MCF 10A (cell line): ENCODE measurements at regions of chr1 and their contacts with region 1.

Region 1: DNA sequence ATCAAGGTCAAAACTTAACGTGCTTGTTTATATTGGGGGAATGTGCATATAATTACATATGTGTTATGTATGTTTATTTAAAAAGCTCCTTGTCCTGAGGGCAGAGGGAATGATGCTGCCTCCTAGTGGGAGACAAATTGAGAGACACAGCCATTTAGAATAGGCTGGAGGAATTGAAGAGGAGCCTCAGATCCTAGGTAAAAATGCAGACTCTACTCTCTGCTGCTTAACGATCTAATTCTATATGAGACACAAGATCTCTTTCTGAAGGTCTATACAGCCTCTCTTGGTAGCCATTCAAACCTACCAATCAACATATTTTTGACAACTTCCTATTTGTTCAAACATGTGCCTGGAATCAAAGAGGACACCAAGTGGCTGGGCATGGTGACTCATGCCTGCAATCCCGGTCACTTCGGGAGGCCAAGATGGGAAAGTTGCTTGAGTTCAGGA is 136.6 kb upstream of the ZNF648 start:
- DNase-seq: peak; percentile 62
- H3K4me3 Mint-ChIP-seq: peak overlapping the region; percentile 15
- H3K27ac Mint-ChIP-seq: peak overlapping the region; percentile 94
- H3K4me1 Mint-ChIP-seq: peaks cover 56% of the 10 kb centered on the region
- H3K27me3 Mint-ChIP-seq: no peaks in the 10 kb centered on the region
- CTCF ChIP-seq: peak; percentile 20

Region 2: DNA sequence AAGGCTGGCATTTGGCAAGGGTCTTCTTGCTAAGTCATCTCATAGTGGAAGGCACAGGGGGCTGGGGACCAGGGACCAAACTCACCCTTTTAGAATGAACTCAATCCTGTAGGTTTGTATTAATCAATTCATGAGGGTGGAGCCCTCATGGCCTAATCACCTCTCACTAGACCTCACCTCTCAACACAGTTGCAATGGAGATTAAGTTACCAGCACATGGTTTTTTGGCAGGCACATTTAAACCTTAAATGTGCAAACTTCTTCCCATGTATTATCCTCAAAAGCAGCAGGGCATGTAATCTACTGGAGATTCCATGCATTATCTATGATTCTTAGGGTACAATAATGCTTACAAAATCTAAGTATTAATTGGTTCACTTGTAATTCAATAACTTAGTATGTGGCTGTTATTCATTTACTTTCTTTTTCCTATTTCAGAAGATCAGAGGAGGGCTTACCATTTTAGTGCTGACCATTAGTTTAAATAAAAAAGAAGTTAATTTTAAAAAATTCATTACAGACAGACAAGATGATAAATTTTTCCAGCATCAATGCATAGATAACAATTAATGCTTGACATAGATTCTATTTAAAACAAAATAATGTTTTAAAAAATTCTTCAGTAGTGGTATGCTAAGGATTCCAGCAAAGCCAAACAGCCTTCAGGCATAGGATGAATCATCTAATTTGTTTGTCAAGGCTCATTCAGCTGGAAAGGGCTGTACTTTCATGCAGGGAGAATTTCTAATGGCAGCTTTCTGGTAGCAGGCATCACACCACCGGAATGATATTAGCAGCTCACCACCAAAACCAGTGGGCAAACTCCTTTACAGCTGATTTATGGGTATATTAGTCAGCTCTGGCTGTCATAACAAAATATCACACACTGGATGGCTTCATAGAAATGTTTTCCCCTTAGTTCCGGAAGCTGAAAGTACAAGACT is 12.0 kb before region 1 on chr1:
- CTCF ChIA-PET with region 1: interaction called, 16 read pairs
- POLR2A ChIA-PET with region 1: interaction called, 131 read pairs
- intact Hi-C with region 1: no loop called
- DNase-seq: peak; percentile 91
- H3K4me3 Mint-ChIP-seq: peak overlapping the region; percentile 10
- H3K27ac Mint-ChIP-seq: peak overlapping the region; percentile 81
- H3K4me1 Mint-ChIP-seq: peaks cover 58% of the 10 kb centered on the region
- H3K27me3 Mint-ChIP-seq: no peaks in the 10 kb centered on the region
- CTCF ChIP-seq: no peak

Region 3: GRCh38 chr1:182215764-182216163 is 17.7 kb after region 1 on chr1:
- CTCF ChIA-PET with region 1: interaction called, 8 read pairs
- POLR2A ChIA-PET with region 1: interaction called, 16 read pairs
- intact Hi-C with region 1: no loop called
- DNase-seq: peak; percentile 28
- H3K4me3 Mint-ChIP-seq: no peak overlapping the region
- H3K27ac Mint-ChIP-seq: peak overlapping the region; percentile 7
- H3K4me1 Mint-ChIP-seq: peaks cover 32% of the 10 kb centered on the region
- H3K27me3 Mint-ChIP-seq: no peaks in the 10 kb centered on the region
- CTCF ChIP-seq: no peak

Region 4: DNA sequence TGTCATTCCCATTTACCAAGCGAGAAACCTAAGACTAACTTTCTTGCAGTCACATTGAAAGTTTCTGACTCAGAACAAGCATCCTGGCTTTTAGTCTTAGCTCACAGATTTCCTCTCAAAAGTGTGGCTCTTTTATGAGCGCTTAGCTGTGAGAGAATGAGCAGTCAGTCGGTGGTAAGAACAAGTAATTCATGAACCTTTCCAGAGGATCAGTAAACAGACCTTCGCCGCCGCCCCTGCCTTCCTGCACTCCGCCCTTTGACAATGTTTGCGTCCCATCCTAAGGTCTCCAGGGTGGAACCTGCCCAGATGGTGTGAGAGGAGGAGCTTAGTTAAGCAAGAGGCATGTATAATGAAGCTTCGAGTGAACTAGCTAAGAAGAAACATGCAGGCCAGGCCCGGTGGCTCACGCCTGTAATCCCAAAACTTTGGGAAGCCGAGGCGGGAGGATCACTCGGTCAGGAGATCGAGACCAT is 51.2 kb after region 1 on chr1:
- CTCF ChIA-PET with region 1: interaction called, 5 read pairs
- POLR2A ChIA-PET with region 1: interaction called, 11 read pairs
- intact Hi-C with region 1: no loop called
- DNase-seq: no peak
- H3K4me3 Mint-ChIP-seq: no peak overlapping the region
- H3K27ac Mint-ChIP-seq: no peak overlapping the region
- H3K4me1 Mint-ChIP-seq: peaks cover 5% of the 10 kb centered on the region
- H3K27me3 Mint-ChIP-seq: no peaks in the 10 kb centered on the region
- CTCF ChIP-seq: no peak

Region 5: GRCh38 chr1:182374101-182374834 is 176.2 kb after region 1 on chr1:
- CTCF ChIA-PET with region 1: no interaction called
- POLR2A ChIA-PET with region 1: interaction called, 71 read pairs
- intact Hi-C with region 1: no loop called
- DNase-seq: no peak
- H3K4me3 Mint-ChIP-seq: no peak overlapping the region
- H3K27ac Mint-ChIP-seq: no peak overlapping the region
- H3K4me1 Mint-ChIP-seq: peaks cover 7% of the 10 kb centered on the region
- H3K27me3 Mint-ChIP-seq: no peaks in the 10 kb centered on the region
- CTCF ChIP-seq: no peak

Region 6: DNA sequence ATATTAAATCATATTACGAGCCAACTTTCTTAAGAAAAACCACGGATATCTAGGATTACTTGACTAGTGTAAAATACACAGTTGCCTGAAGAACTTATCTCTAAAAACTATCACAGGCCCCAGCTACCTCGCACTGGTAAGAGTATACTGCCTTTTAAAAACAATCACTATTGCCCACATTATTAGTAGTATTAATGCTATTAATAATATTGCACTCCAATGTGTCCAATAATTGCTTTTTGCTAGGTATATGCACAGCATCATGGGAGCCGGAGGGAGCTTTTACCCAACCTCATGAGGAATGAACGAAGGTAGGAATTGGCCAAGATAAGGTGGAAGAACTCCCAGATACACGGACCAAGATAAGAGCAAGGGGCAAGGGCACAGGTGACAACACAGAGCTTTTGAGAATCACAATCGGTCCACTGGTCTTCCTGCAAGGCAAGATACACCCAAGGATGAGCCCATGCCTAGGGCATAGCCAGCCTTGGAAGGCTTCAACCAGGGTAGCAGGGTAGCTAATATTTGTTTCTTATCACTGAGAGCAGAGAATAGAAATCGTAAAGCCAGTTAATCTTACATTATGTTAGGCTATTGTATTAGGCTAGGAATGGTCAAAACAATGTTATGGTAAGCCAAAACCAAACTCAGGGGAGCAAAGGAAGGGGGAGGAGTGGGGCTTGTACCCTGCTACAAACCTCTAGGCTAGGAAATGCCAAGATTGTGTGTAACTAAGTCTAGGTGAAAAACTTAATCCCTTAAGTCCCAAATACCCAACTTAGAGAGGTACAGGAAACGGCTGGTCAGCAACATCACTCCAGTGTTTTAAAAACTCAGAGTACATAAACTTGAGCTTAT is 184.1 kb after region 1 on chr1:
- CTCF ChIA-PET with region 1: interaction called, 7 read pairs
- POLR2A ChIA-PET with region 1: interaction called, 71 read pairs
- intact Hi-C with region 1: no loop called
- DNase-seq: no peak
- H3K4me3 Mint-ChIP-seq: no peak overlapping the region
- H3K27ac Mint-ChIP-seq: peak overlapping the region; percentile 78
- H3K4me1 Mint-ChIP-seq: peaks cover 39% of the 10 kb centered on the region
- H3K27me3 Mint-ChIP-seq: no peaks in the 10 kb centered on the region
- CTCF ChIP-seq: no peak

Region 7: GRCh38 chr1:182391362-182392044 is 193.4 kb after region 1 on chr1 and contains the start of gene GLUL:
- CTCF ChIA-PET with region 1: interaction called, 10 read pairs
- POLR2A ChIA-PET with region 1: interaction called, 21 read pairs
- intact Hi-C with region 1: loop called (anchors 2 kb)
- DNase-seq: peak; percentile 90
- H3K4me3 Mint-ChIP-seq: peak within 1 kb of the TSS; percentile 100
- H3K27ac Mint-ChIP-seq: peak within 1 kb of the TSS; percentile 100
- H3K4me1 Mint-ChIP-seq: peaks cover 27% of the 10 kb centered on the region
- H3K27me3 Mint-ChIP-seq: no peaks in the 10 kb centered on the region
- CTCF ChIP-seq: peak; percentile 2
- total RNA-seq, gene GLUL: 240 and 437 TPM in 2 replicates